ENCODE measurements at regions of chr11 and their contacts with region 1.

Region 1: GRCh38 chr11:128323381-128323780 is 264.0 kb downstream of the ETS1 start:
- DNase-seq: peak in 6 of 9 experiments; percentile 13 to 82 (median 60)
- ATAC-seq: no peak
- H3K4me3 ChIP-seq: no peak overlapping the region
- H3K4me3 Mint-ChIP-seq: peak overlapping the region; percentile 16
- H3K27ac ChIP-seq: peak overlapping the region; percentile 87 to 90
- H3K27ac Mint-ChIP-seq: peak overlapping the region; percentile 94
- H3K4me1 ChIP-seq: peaks cover 93% of the 10 kb centered on the region
- H3K4me1 Mint-ChIP-seq: peaks cover 85% of the 10 kb centered on the region
- H3K27me3 ChIP-seq: no peaks in the 10 kb centered on the region
- H3K27me3 Mint-ChIP-seq: no peaks in the 10 kb centered on the region
- CTCF ChIP-seq: peak; percentile 37

Region 2: DNA sequence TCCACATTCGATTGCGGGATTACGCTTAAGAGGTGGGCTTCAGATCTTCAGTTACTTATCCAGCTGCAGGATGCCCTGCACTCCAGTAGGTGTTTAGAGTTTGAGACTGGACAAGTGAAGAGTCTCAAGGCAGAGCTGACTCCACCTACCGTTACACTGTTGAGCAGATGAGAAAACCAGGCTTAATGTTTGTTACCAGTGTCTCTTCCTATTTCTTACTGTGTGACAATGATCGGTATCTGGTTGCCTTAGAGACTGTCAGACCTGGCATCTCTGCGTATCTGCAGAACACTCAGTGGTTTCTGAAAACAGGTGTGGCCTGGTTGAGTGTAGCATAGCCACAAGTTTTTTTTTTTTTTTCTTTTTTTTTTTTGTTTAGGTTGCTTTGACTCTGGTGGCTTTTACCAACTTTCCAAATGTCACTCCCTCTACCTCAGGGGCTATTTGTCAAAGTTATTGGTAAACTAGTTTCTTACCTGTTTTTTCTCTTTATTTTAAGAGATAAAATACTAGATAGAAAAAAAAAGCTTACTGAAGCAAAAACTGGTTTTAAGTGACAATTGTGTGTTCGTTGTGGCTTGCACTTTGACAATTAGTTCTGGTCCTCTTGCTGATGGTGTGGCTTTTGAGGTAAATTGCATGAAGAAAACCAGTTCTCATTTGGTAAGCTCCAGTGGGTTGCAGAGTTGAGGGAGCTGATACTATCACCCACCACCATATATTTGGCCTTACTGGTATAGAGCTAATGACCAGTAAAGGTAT is 20.8 kb before region 1 on chr11:
- CTCF ChIA-PET with region 1: interaction called, 44 read pairs
- POLR2A ChIA-PET with region 1: interaction called, 16 read pairs
- intact Hi-C with region 1: loop called (anchors 1 kb)
- DNase-seq: peak; percentile 49 to 97 (median 72)
- ATAC-seq: peak; percentile 85
- H3K4me3 ChIP-seq: peak overlapping the region; percentile 46 to 51
- H3K4me3 Mint-ChIP-seq: peak overlapping the region; percentile 88
- H3K27ac ChIP-seq: peak overlapping the region; percentile 87 to 89
- H3K27ac Mint-ChIP-seq: peak overlapping the region; percentile 99
- H3K4me1 ChIP-seq: peaks cover 88% of the 10 kb centered on the region
- H3K4me1 Mint-ChIP-seq: peaks cover 92% of the 10 kb centered on the region
- H3K27me3 ChIP-seq: no peaks in the 10 kb centered on the region
- H3K27me3 Mint-ChIP-seq: no peaks in the 10 kb centered on the region
- CTCF ChIP-seq: no peak

Region 3: DNA sequence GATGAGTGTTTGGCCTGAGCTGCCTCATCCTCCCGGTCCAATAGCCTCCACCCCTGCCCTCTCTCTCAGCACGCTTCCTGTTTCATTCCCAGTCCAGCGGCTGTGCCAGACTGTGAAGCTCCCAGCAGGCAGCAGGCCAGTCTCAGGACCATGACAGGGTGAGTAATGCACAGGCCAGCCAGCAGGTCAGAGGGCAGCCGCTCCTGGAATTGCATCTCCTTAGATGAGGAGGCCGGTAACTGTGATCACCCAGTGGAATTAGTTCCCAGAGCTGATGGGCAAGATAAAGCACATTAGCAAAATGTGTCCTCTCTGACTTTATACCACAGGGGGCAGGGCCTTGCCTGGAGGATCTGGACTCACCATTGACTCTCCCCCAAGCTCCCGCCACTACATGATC is 12.8 kb after region 1 on chr11:
- CTCF ChIA-PET with region 1: interaction called, 13 read pairs
- POLR2A ChIA-PET with region 1: interaction called, 16 read pairs
- intact Hi-C with region 1: loop called in 1 of 2 experiments (anchors 1 kb)
- DNase-seq: no peak
- ATAC-seq: no peak
- H3K4me3 ChIP-seq: no peak overlapping the region
- H3K4me3 Mint-ChIP-seq: no peak overlapping the region
- H3K27ac ChIP-seq: no peak overlapping the region
- H3K27ac Mint-ChIP-seq: no peak overlapping the region
- H3K4me1 ChIP-seq: peaks cover 27% of the 10 kb centered on the region
- H3K4me1 Mint-ChIP-seq: peaks cover 58% of the 10 kb centered on the region
- H3K27me3 ChIP-seq: no peaks in the 10 kb centered on the region
- H3K27me3 Mint-ChIP-seq: no peaks in the 10 kb centered on the region
- CTCF ChIP-seq: no peak

Region 4: DNA sequence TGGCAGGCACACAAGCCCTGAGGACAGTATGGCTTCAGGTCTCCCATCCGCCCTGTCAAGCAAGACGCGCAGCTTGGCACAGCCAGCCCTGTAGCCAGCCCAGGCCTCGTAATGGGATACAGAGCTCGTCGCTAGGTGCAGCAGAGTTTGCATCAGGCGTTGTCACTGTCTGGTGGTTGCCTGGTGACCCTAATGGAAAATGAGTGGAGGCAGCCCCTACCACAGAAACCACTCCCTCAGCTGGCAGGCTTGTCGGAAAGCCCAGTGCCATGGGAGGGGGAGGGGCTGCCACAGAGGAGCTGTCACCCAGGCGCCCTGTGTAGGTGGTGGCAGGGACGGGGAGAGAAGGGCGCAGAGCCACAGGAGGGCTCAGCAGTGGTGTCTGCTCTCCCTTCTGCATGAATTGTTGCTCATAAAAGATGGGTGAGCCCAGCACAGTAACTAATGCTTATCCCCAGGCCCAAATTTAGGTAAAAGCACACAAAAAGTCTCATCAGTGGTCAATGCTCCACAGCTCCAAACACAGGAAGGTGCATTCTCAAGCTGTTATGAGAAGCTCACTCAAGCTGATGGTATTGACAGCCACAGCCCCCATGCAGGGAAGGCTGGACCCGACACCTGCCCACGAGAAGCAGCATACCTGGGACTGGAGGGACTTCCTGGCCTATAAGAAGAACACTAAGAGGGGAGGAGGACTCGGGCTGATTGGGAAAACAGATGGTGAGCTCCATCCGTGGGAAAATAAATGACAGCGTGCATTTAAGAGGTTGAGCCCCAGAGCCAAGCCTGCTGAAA is 99.4 kb after region 1 on chr11:
- CTCF ChIA-PET with region 1: interaction called, 10 read pairs
- POLR2A ChIA-PET with region 1: no interaction called
- intact Hi-C with region 1: loop called in 1 of 2 experiments (anchors 1 kb)
- DNase-seq: peak; percentile 70 to 95 (median 87)
- ATAC-seq: peak; percentile 95
- H3K4me3 ChIP-seq: peak overlapping the region in 1 of 2 experiments; percentile 0
- H3K4me3 Mint-ChIP-seq: peak overlapping the region; percentile 53
- H3K27ac ChIP-seq: peak overlapping the region; percentile 18 to 41
- H3K27ac Mint-ChIP-seq: peak overlapping the region; percentile 97
- H3K4me1 ChIP-seq: peaks cover 41% of the 10 kb centered on the region
- H3K4me1 Mint-ChIP-seq: peaks cover 51% of the 10 kb centered on the region
- H3K27me3 ChIP-seq: no peaks in the 10 kb centered on the region
- H3K27me3 Mint-ChIP-seq: no peaks in the 10 kb centered on the region
- CTCF ChIP-seq: no peak

Region 5: DNA sequence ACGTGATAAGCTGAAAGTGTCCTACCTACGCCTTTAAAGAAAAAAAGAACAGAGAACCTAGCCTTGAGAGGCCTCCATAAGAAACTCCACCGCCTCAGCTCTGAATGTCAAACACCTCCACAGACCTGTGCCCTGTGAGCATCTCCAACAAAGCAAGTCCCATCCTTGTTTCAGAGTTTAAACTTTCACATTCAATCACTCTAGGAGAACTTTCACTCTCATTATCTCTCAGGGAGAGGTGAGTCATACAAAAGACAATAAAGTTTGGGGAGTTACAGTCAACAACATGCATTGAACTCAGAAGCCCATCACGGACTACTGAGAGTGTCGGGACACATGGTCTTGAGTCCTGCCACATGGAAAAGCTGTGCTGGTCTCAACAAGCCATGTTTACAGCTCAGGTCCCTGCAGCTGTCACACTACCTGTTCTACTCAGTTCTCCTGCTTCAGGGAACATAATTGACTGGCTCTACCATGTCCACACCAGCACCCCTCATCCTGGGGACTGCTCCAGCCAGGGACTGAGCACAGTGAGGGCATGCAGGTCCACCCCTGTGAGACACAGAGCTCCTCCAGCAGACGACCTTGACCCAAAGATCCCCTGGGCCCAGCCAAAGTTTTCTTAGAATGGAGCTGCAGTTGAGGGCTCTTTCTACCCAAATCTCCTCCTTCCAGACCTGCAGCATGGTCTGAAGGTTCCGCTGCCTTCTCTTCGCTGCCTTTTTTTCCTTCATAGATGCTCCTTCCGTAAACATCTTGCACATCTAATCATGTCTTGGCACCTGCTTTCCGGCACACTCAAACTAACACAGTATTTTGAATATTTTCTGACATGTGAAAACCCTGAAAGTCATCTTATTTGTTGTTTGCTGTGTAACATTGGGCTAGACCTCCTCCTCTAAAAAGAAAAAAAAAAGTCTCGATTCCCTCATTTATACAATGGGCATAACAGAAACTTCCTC is 149.0 kb after region 1 on chr11:
- CTCF ChIA-PET with region 1: interaction called, 34 read pairs
- POLR2A ChIA-PET with region 1: interaction called, 14 read pairs
- intact Hi-C with region 1: loop called (anchors 1 to 2 kb)
- DNase-seq: peak in 5 of 9 experiments; percentile 46 to 81 (median 63)
- ATAC-seq: peak; percentile 33
- H3K4me3 ChIP-seq: peak overlapping the region; percentile 4 to 33
- H3K4me3 Mint-ChIP-seq: peak overlapping the region; percentile 74
- H3K27ac ChIP-seq: peak overlapping the region; percentile 68 to 88
- H3K27ac Mint-ChIP-seq: peak overlapping the region; percentile 94
- H3K4me1 ChIP-seq: peaks cover 99% of the 10 kb centered on the region
- H3K4me1 Mint-ChIP-seq: peaks cover 99% of the 10 kb centered on the region
- H3K27me3 ChIP-seq: no peaks in the 10 kb centered on the region
- H3K27me3 Mint-ChIP-seq: no peaks in the 10 kb centered on the region
- CTCF ChIP-seq: no peak

Region 6: GRCh38 chr11:128512474-128512996 is 189.2 kb after region 1 on chr11:
- CTCF ChIA-PET with region 1: interaction called, 28 read pairs
- POLR2A ChIA-PET with region 1: interaction called, 7 read pairs
- intact Hi-C with region 1: loop called in 1 of 2 experiments (anchors 5 kb)
- DNase-seq: peak in 4 of 9 experiments; percentile 37 to 58 (median 44)
- ATAC-seq: peak; percentile 13
- H3K4me3 ChIP-seq: peak overlapping the region; percentile 45 to 94
- H3K4me3 Mint-ChIP-seq: peak overlapping the region; percentile 98
- H3K27ac ChIP-seq: peak overlapping the region; percentile 33 to 75
- H3K27ac Mint-ChIP-seq: peak overlapping the region; percentile 98
- H3K4me1 ChIP-seq: peaks cover 71% of the 10 kb centered on the region
- H3K4me1 Mint-ChIP-seq: peaks cover 91% of the 10 kb centered on the region
- H3K27me3 ChIP-seq: no peaks in the 10 kb centered on the region
- H3K27me3 Mint-ChIP-seq: no peaks in the 10 kb centered on the region
- CTCF ChIP-seq: no peak